Sigmoid colon (tissue), 7 donors: ENCODE measurements at regions of chr9 and their contacts with region 1.

Region 1: GRCh38 chr9:6055213-6055612 is 39.8 kb upstream of the RANBP6 start:
- DNase-seq: no peak
- H3K4me3 ChIP-seq: no peak overlapping the region
- H3K27ac ChIP-seq: no peak overlapping the region
- H3K4me1 ChIP-seq: no peaks in the 10 kb centered on the region
- H3K27me3 ChIP-seq: no peaks in the 10 kb centered on the region
- CTCF ChIP-seq: peak; percentile 21 to 45 (median 28)
- EP300 ChIP-seq: no peak
- POLR2A ChIP-seq: no peak

Region 2: DNA sequence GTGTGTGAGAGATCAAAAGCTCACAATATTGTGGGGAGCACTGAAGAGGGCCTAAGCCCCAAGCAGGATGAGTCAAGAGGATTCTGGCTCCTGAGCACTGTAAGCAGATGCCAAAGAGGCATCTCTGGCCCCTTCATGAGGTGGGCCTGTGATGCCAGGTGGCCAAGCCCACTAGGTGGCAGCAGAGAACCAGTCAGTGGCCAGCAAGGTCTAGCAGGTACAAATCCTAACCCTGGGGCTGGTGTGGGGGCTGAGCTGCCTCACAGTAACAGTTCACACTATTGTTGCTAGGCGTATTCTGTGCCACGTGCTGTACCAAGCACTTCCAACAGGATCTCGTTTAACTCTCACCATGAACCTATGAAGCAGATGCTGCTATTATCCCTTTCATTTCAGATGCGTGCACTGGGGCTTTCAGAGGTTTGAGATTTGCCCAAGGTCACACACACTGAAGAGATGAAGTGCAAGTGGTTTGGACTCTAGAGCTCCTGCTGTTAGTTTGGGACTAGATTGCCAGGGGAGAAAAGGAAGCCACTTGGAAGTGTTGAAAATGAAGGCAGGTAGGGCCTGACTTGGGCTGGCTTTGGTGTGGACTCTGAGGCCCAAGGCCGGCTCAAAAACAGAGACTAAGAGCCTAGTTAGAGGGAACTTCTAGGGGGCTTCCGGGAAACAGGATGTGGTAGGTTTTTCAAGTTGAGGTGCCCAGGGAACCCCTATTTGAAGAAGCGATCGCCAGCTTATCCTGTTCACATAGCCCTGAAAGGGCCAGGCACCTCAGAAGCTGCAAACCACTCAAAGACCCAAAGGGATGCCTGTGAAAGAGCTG is 168.9 kb before region 1 on chr9:
- intact Hi-C with region 1: loop called (anchors 2 kb)
- DNase-seq: peak; percentile 70
- H3K4me3 ChIP-seq: no peak overlapping the region
- H3K27ac ChIP-seq: no peak overlapping the region
- H3K4me1 ChIP-seq: no peaks in the 10 kb centered on the region
- H3K27me3 ChIP-seq: no peaks in the 10 kb centered on the region
- CTCF ChIP-seq: peak; percentile 35 to 89 (median 58)
- EP300 ChIP-seq: no peak
- POLR2A ChIP-seq: no peak

Region 3: GRCh38 chr9:5949103-5949699 is 106.0 kb before region 1 on chr9:
- intact Hi-C with region 1: no loop called
- DNase-seq: no peak
- H3K4me3 ChIP-seq: peak overlapping the region in 1 of 4 donors; percentile 5
- H3K27ac ChIP-seq: no peak overlapping the region
- H3K4me1 ChIP-seq: peaks cover 0 to 21% (median 7%) of the 10 kb centered on the region in 4 donors
- H3K27me3 ChIP-seq: no peaks in the 10 kb centered on the region
- CTCF ChIP-seq: no peak
- EP300 ChIP-seq: no peak
- POLR2A ChIP-seq: no peak